ENCODE measurements at regions of chr15 and their contacts with region 1.

Region 1: DNA sequence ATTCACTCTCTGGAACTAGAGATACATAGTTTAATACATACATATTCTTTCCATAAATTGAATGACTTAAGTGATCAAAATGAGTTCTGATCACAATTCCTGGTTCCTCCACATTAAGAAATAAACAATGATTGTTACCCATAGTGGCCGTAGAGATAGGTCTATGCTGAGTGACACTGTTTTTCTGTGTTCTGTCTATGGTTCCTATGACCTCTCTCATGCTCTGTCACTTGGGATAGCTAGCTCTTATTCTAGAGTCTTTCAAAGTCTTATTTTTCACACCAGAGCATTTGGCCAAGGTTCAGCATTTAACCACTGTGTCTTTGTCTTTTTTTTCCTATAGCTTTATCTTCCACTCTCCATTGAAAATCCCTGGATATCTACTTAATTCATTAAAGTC is 132.4 kb downstream of the GOLGA6L6 start:
- DNase-seq: no peak
- H3K4me3 ChIP-seq: no peak overlapping the region
- H3K4me3 Mint-ChIP-seq: no peak overlapping the region
- H3K27ac Mint-ChIP-seq: no peak overlapping the region
- H3K4me1 ChIP-seq: no peaks in the 10 kb centered on the region
- H3K4me1 Mint-ChIP-seq: no peaks in the 10 kb centered on the region
- H3K27me3 ChIP-seq: no peaks in the 10 kb centered on the region
- H3K27me3 Mint-ChIP-seq: no peaks in the 10 kb centered on the region
- CTCF ChIP-seq: no peak

Region 2: GRCh38 chr15:19944261-19944888 is 464.9 kb before region 1 on chr15:
- CTCF ChIA-PET with region 1: no interaction called
- POLR2A ChIA-PET with region 1: no interaction called
- intact Hi-C with region 1: no loop called
- DNase-seq: no peak
- H3K4me3 ChIP-seq: no peak overlapping the region
- H3K4me3 Mint-ChIP-seq: no peak overlapping the region
- H3K27ac Mint-ChIP-seq: no peak overlapping the region
- H3K4me1 ChIP-seq: no peaks in the 10 kb centered on the region
- H3K4me1 Mint-ChIP-seq: no peaks in the 10 kb centered on the region
- H3K27me3 ChIP-seq: no peaks in the 10 kb centered on the region
- H3K27me3 Mint-ChIP-seq: no peaks in the 10 kb centered on the region
- CTCF ChIP-seq: no peak

Region 3: DNA sequence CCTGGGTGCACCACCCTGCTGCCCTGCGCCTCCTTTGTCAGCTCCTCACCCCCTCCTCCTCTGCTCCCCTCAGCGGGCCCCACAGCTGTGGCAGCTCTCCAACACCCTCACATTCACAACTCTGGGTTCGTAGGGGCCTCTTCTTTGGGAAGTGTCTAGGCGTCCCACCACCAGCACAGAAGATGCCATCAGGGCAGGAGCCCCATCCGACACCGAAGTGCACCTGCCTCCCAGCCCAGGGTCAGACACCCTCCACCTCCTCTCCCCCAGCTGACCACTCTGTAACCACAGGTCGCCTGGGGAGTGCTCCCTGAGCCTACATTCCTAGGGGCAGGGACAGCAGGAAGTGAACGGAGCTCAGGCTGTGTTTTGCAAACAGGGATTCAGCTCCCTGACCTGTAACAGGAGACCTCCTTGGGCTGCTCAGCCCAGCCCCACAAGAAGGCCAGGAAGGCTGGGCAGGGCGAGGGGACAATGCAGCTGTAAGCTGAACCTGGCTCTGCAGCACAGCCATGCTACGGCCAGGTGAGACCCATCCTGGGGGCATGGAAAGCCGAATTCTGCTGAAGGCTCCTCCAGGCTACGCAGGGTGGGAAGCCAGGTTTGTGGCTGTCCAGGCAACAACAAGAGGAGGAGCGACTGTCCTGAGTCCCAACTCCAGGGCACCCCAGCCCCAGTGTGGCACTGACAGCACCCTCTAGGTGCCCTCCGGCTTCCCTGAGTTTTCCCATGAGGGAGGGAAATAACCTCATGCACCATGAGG is 136.6 kb before region 1 on chr15:
- CTCF ChIA-PET with region 1: no interaction called
- POLR2A ChIA-PET with region 1: no interaction called
- intact Hi-C with region 1: loop called (anchors 10 kb)
- DNase-seq: no peak
- H3K4me3 ChIP-seq: no peak overlapping the region
- H3K4me3 Mint-ChIP-seq: no peak overlapping the region
- H3K27ac Mint-ChIP-seq: no peak overlapping the region
- H3K4me1 ChIP-seq: no peaks in the 10 kb centered on the region
- H3K4me1 Mint-ChIP-seq: no peaks in the 10 kb centered on the region
- H3K27me3 ChIP-seq: no peaks in the 10 kb centered on the region
- H3K27me3 Mint-ChIP-seq: no peaks in the 10 kb centered on the region
- CTCF ChIP-seq: no peak

Region 4: DNA sequence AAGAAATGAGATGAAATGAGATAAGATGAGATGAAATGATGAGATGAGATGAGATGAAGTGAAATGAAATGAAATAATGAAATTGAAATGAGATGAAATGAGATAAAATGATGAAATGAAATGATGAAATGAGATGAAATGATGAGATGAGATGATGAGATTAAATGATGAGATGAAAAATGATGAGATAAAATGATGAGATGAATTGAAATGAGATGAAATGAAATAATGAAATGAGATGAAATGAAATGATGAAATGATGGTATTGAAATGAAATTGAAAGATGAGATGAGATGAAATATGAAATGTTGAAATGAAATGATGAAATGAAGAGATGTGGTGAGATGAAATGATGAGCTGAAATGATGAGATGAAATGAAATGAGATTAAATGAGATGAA is 98.6 kb before region 1 on chr15:
- CTCF ChIA-PET with region 1: no interaction called
- POLR2A ChIA-PET with region 1: no interaction called
- intact Hi-C with region 1: no loop called
- DNase-seq: no peak
- H3K4me3 ChIP-seq: no peak overlapping the region
- H3K4me3 Mint-ChIP-seq: no peak overlapping the region
- H3K27ac Mint-ChIP-seq: no peak overlapping the region
- H3K4me1 ChIP-seq: no peaks in the 10 kb centered on the region
- H3K4me1 Mint-ChIP-seq: no peaks in the 10 kb centered on the region
- H3K27me3 ChIP-seq: no peaks in the 10 kb centered on the region
- H3K27me3 Mint-ChIP-seq: no peaks in the 10 kb centered on the region
- CTCF ChIP-seq: no peak

Region 5: DNA sequence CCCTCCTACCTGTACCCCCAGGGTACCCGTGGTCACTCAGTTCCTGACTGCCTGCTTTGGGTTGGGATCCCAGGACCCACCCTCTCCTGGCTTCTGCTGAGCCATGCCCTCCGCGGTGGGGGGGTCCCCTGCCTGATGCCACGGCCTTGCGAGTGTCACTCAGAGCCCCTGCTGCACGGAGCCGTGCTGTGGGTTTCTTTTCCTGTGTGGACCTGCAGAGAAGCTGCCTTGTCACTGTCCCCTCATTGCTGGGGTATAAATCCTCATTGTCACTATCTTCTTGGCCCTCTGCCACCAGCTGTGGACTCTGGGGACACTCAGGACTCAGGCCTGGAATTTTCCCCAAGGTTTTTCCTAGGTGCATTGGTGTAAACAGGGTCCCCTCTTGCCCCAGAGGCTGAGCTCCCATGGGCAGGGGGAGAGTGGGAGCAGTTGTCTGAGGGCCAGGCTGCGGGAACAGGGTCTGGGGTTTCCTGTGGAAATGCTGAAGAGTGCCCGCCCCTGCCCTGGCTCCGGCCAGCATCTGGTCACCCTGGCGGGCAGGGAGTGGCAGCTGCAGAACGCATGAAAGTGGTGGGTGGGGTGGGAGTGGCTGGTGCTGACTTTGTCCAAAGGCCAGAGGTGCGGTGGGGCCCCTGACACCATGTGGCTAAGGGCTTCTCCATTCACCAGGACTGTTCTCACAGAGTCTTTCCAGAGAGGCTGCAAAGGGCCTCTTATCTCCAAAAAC is 59.3 kb before region 1 on chr15:
- CTCF ChIA-PET with region 1: no interaction called
- POLR2A ChIA-PET with region 1: no interaction called
- intact Hi-C with region 1: loop called (anchors 5 kb)
- DNase-seq: peak in 1 of 2 experiments; percentile 80
- H3K4me3 ChIP-seq: no peak overlapping the region
- H3K4me3 Mint-ChIP-seq: no peak overlapping the region
- H3K27ac Mint-ChIP-seq: no peak overlapping the region
- H3K4me1 ChIP-seq: no peaks in the 10 kb centered on the region
- H3K4me1 Mint-ChIP-seq: no peaks in the 10 kb centered on the region
- H3K27me3 ChIP-seq: no peaks in the 10 kb centered on the region
- H3K27me3 Mint-ChIP-seq: no peaks in the 10 kb centered on the region
- CTCF ChIP-seq: no peak

Measured in Caco-2 (cell line).